Dorsolateral prefrontal cortex (tissue), 120 donors: ENCODE measurements at regions of chr16 and their contacts with region 1.

Region 1: DNA sequence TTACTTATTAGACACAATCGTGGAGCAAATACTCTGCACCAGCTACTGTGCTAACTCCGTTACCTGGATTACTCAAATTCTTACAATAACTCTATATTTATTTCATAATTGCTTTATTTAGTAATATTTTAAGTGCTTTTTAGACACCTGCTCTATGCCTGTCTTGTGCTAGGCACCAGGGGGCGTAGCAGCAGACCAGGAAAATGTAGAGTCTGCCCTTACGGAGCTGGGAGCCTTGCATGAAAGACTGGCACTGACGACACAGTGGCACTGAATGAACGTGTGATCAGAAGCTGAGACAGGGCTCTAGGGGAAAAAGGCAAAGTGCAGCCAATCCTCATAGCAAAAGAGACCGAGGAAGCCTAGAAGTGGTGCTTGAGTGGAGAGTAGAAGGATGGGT is 486.5 kb downstream of the CDH13 start:
- DNase-seq: peak; percentile 20 to 75 (median 61)
- H3K4me3 ChIP-seq: no peak overlapping the region
- H3K27ac ChIP-seq: no peak overlapping the region
- H3K27me3 ChIP-seq: peaks cover 0 to 6% (median 0%) of the 10 kb centered on the region in 45 donors
- CTCF ChIP-seq: peak; percentile 18 to 88 (median 72)

Region 2: DNA sequence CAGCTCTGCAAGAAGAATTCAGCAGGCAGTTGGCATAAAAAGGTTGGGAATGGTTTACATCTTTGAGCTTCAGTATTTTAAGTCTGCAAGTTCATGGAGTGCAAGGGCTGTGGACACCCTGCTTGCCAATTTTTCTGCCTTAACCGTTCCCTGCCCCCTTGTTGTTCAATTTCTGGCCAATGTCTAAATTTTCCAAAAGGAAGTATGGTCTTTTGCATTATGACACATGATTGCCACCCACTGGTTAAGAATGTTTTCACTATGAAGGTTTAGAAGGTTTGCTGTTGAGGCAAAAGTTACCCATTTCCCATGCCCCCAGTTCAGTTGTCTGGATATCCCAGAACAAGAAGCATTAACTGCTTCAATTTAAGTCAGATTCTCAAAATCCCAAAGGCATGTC is 44.6 kb before region 1 on chr16:
- intact Hi-C with region 1: no loop called
- DNase-seq: no peak
- H3K4me3 ChIP-seq: no peak overlapping the region
- H3K27ac ChIP-seq: no peak overlapping the region
- H3K27me3 ChIP-seq: no peaks in the 10 kb centered on the region
- CTCF ChIP-seq: peak in 30 of 56 donors; percentile 3 to 43 (median 30)

Region 3: DNA sequence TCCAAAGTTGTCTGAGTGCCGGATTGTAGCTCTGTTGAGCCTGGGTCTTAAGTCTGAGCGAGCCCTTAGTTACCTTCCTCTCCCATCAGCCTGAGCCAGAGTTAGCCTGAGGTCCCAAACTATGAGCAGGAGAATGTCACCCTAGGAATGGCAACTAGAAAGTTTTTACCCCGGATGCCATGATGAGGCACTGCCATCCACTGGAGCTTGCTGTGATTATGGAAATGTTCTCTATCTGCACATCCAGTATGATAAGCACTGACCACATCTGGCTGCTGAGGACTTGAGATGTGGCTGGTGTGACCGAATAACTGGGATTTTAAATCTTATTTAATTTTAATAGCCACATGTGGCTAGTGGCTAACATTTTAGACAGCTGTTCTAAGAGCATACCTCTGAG is 63.5 kb after region 1 on chr16:
- intact Hi-C with region 1: loop called in 1 of 2 experiments (anchors 2 kb)
- DNase-seq: peak in 1 of 10 donors; percentile 65
- H3K4me3 ChIP-seq: no peak overlapping the region
- H3K27ac ChIP-seq: no peak overlapping the region
- H3K27me3 ChIP-seq: no peaks in the 10 kb centered on the region
- CTCF ChIP-seq: peak in 30 of 56 donors; percentile 10 to 70 (median 38)